MCF 10A (cell line): ENCODE measurements at regions of chr1 and their contacts with region 1.

Region 1: DNA sequence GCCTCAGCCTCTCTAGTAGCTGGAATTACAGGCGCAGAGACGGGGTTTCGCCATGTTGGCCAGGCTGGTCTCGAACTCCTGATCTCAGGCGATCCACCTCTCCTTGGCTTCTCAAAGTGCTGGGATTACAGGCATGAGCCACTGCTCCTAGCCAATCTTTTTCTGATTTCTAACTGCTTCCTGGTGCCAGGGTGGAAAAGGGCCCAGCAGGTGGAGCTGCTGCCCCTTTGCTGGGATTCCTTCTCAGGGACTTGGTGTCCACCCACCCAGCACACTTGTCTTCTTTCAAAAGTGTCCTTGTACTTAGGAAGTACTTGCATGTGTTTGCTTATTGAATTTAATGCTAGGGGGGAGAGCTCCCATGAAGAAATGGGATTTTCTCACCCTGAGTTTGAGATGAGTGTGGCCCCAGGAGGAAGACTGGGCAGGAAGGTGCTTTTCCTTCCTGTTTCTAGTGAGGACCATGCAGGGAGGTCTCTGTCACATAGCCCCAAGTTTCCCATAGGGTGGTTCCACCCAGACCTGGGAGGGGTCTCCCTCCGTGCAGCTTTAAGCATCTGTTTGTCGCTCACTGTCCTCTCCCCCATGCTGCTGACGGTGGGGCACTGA is 14.2 kb downstream of the UTP11 start:
- DNase-seq: peak; percentile 74
- H3K4me3 Mint-ChIP-seq: peak overlapping the region; percentile 38
- H3K27ac Mint-ChIP-seq: peak overlapping the region; percentile 54
- H3K4me1 Mint-ChIP-seq: peaks cover 41% of the 10 kb centered on the region
- H3K27me3 Mint-ChIP-seq: no peaks in the 10 kb centered on the region
- CTCF ChIP-seq: peak; percentile 64

Region 2: DNA sequence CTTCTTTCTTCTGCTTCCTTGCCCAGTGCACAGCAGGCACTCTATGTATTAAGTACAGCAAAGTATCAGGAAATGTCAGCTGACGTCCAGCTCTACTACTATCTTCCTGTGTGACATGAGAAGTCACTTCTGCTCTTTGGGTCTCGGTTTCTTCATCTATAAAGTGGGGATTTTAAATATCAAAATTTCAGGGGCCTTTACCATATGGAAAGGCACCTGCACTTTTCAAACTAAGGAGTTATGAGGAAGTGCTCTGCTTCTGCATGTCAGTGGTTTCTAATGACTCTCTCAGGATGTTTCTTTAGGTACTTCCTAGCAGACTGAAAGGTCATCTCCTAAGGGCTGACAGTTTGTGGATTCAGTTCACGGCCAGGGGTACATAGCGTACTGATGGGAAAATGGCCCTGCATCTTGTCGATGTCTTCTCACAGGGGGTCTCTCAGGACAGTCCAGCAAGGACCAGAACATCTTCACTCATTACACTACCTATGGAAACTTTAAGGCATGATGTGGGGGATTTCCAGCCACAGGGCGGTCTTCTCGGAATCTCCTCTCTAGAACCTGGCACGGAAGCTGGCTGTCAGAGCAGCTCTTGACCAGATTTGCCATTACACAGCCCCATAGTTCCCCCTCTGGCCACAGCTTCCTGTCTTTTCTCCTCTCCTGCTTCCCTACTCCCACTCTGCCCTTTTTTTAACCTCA is 125.4 kb before region 1 on chr1:
- CTCF ChIA-PET with region 1: no interaction called
- POLR2A ChIA-PET with region 1: no interaction called
- intact Hi-C with region 1: no loop called
- DNase-seq: no peak
- H3K4me3 Mint-ChIP-seq: no peak overlapping the region
- H3K27ac Mint-ChIP-seq: no peak overlapping the region
- H3K4me1 Mint-ChIP-seq: no peaks in the 10 kb centered on the region
- H3K27me3 Mint-ChIP-seq: no peaks in the 10 kb centered on the region
- CTCF ChIP-seq: no peak

Region 3: GRCh38 chr1:38012363-38013226 is 14.1 kb before region 1 on chr1 and contains the start of gene UTP11:
- CTCF ChIA-PET with region 1: interaction called, 58 read pairs
- POLR2A ChIA-PET with region 1: interaction called, 42 read pairs
- intact Hi-C with region 1: no loop called
- DNase-seq: peak; percentile 100
- H3K4me3 Mint-ChIP-seq: peak within 1 kb of the TSS; percentile 97
- H3K27ac Mint-ChIP-seq: peak within 1 kb of the TSS; percentile 99
- H3K4me1 Mint-ChIP-seq: peaks cover 20% of the 10 kb centered on the region
- H3K27me3 Mint-ChIP-seq: no peaks in the 10 kb centered on the region
- CTCF ChIP-seq: no peak
- total RNA-seq, gene UTP11: 66.5 and 70.3 TPM in 2 replicates

Region 4: GRCh38 chr1:38046884-38047602 is 20.3 kb after region 1 on chr1:
- CTCF ChIA-PET with region 1: interaction called, 8 read pairs
- POLR2A ChIA-PET with region 1: interaction called, 12 read pairs
- intact Hi-C with region 1: no loop called
- DNase-seq: peak; percentile 59
- H3K4me3 Mint-ChIP-seq: peak overlapping the region; percentile 76
- H3K27ac Mint-ChIP-seq: no peak overlapping the region
- H3K4me1 Mint-ChIP-seq: no peaks in the 10 kb centered on the region
- H3K27me3 Mint-ChIP-seq: peaks cover 31% of the 10 kb centered on the region
- CTCF ChIP-seq: no peak

Region 5: DNA sequence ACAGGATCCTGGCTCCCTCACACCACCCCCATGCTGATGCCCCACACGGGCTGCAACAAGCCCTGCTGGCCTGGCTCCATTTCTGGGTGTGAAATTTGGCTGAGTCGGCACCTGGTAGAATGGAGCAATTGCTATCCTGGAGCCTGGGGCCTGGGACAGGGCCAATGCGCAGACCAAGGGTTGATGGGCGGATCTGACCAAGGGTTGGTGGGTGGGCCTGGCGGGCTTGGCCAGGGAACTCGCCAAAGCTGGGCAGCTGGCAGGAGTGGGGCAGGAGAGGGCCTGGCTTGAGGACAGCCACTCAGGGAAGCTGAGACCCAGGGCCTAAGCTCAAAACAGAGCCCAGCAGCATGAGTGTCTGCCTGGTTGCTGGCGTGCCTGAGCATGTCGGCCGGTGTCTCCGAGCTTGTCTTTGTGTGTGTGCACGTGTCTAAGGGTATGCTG is 90.8 kb after region 1 on chr1:
- CTCF ChIA-PET with region 1: interaction called, 8 read pairs
- POLR2A ChIA-PET with region 1: interaction called, 21 read pairs
- intact Hi-C with region 1: no loop called
- DNase-seq: peak; percentile 94
- H3K4me3 Mint-ChIP-seq: no peak overlapping the region
- H3K27ac Mint-ChIP-seq: peak overlapping the region; percentile 27
- H3K4me1 Mint-ChIP-seq: peaks cover 44% of the 10 kb centered on the region
- H3K27me3 Mint-ChIP-seq: no peaks in the 10 kb centered on the region
- CTCF ChIP-seq: no peak

Region 6: DNA sequence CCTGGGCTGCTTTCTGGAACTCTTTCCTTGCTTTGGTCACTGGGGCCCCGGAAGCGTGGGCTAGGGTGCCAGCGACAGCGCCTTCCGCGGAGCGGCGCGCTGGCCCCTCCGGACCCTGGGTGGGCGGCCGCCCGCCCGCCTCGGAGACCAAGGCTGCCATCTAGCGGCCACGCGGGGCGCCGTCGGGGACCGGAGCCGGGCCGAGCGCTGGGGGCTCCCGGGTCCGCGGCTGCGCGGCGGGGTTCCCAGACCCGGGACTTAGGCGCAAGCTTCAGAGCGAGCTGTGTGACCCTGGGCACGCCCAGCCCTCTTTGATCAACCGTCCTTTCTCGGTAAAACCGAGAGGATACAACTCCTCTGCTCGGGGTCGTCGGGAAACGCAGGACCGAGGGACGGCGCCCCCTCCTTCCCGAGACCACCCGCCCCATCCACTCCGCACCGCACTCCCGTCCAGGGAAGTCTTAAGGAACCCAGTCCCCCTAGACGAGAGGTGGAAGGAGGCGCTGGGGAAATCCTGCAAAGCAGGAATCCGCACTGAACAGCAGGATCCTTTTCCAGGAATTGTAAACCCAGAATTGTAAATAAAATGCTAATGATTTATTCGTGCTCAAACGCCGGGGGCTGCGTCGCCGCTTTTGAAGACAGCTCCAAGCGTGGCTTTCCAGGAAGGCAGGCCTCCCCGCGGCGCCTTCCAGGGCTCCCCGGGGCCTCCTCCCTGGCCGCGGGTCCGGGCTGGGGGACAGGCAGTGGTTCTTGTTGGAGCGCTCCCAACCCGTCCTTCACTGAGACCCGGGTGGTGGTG is 791.7 kb after region 1 on chr1:
- CTCF ChIA-PET with region 1: interaction called, 32 read pairs
- POLR2A ChIA-PET with region 1: interaction called, 4 read pairs
- intact Hi-C with region 1: no loop called
- DNase-seq: no peak
- H3K4me3 Mint-ChIP-seq: no peak overlapping the region
- H3K27ac Mint-ChIP-seq: no peak overlapping the region
- H3K4me1 Mint-ChIP-seq: no peaks in the 10 kb centered on the region
- H3K27me3 Mint-ChIP-seq: peaks cover 11% of the 10 kb centered on the region
- CTCF ChIP-seq: peak; percentile 61